Ovary (tissue), 10 donors: ENCODE measurements at regions of chr19 and their contacts with region 1.

Region 1: DNA sequence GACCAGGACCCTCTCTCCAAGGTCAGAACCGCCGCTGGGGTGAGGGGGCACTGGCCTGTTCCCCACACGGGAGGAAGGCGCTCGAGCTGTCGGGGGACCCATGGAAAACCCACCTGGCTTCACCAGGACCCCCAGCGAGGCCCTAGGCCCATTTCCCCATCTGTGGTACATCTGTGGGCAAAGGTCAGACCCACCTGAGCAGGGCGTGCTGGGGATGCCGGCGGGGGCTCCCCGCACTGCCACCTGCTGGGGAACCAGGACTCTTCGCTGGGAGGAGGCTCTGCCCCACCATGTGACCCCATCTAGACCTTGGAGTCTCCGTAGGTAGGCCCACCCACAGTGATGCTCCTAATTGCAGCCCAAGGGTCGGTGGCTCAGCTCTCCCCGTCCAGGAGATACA is 511 bp downstream of the WDR88 start:
- DNase-seq: no peak
- H3K4me3 ChIP-seq: no peak overlapping the region
- H3K27ac ChIP-seq: no peak overlapping the region
- H3K4me1 ChIP-seq: no peaks in the 10 kb centered on the region
- H3K27me3 ChIP-seq: no peaks in the 10 kb centered on the region
- CTCF ChIP-seq: no peak
- EP300 ChIP-seq: no peak
- POLR2A ChIP-seq: no peak

Region 2: DNA sequence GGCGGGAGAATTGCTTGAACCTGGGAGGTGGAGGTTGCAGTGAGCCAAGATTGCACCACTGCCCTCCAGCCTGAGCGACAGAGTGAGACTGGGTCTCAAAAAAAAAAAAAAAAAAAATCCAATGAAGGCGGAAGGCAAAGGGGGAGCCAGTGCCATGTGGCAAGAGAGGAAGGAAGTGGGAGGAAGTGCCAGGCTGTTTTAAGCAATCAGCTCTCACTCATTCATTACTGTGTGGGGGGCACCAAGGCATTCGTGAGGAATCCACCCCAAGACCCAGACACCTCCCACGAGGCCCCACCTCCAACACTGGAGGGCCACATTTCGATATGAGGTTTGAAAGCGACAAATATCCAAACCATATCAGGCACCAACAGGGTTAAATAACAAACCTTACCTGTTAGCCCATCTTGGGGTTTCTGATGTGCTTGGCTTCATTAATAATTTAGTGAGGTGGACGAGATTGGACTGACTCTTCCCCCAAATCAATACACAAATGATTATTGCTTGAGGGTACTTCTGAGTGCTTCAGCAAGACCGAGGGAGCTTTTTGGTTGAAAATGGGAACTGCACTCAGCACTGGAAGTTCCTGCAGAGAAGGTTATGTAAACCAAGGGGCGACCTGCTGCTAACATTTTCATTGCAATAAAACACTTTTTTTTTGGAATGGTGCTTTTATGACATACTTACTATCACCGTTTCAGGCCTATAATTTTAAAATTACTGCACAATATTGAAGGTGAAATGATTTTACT is 54.2 kb after region 1 on chr19:
- intact Hi-C with region 1: loop called in 1 of 4 experiments (anchors 10 kb)
- DNase-seq: no peak
- H3K4me3 ChIP-seq: no peak overlapping the region
- H3K27ac ChIP-seq: no peak overlapping the region
- H3K4me1 ChIP-seq: no peaks in the 10 kb centered on the region
- H3K27me3 ChIP-seq: no peaks in the 10 kb centered on the region
- CTCF ChIP-seq: no peak
- EP300 ChIP-seq: no peak
- POLR2A ChIP-seq: no peak

Region 3: DNA sequence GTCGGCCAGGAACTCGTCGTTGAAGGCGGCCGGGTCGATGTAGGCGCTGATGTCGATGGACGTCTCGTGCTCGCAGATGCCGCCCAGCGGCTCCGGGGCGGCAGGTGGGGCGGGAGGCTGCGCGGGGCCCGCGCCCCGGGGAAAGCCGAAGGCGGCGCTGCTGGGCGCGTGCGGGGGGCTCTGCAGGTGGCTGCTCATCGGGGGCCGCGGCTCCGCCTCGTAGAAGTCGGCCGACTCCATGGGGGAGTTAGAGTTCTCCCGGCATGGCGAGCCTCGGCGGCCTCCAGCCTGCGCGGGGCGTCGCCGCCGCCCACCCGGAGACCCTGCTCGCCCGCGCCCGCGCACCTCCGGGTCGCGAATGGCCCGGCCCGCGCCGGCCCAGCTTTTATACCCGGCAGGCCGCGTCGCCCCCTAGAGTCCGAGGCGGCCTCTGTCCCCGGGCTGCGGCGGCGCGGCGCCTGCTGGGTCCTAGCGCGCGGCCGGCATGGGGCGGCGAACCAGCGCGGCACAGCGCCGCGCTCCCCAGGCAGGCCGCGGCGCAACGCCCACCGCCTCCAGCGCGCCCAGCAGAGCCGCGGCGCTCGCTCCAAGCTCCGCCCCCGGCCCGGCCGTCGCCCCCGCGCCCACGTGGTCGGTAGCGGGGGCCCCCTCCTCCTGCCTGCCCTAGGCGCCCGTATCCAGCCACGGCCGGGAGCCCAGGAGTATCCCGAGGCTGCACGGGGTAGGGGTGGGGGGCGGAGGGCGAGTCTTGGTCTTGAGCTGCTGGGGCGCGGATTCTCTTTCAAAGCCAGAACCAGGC is 169.9 kb after region 1 on chr19 and contains the start of gene CEBPA:
- intact Hi-C with region 1: loop called in 1 of 4 experiments (anchors 10 kb)
- DNase-seq: peak; percentile 46 to 82 (median 75)
- H3K4me3 ChIP-seq: peak within 1 kb of the TSS; percentile 56
- H3K27ac ChIP-seq: peak within 1 kb of the TSS in 1 of 2 donors; percentile 63
- H3K4me1 ChIP-seq: peaks cover 10% of the 10 kb centered on the region
- H3K27me3 ChIP-seq: no peaks in the 10 kb centered on the region
- CTCF ChIP-seq: peak in 2 of 3 donors; percentile 50 to 90
- EP300 ChIP-seq: no peak
- POLR2A ChIP-seq: peak; percentile 89
- total RNA-seq, gene CEBPA: 1.5 to 6.1 (median 3.7) TPM